Breast epithelium (tissue), 4 donors: ENCODE measurements at regions of chr15 and their contacts with region 1.

Region 1: DNA sequence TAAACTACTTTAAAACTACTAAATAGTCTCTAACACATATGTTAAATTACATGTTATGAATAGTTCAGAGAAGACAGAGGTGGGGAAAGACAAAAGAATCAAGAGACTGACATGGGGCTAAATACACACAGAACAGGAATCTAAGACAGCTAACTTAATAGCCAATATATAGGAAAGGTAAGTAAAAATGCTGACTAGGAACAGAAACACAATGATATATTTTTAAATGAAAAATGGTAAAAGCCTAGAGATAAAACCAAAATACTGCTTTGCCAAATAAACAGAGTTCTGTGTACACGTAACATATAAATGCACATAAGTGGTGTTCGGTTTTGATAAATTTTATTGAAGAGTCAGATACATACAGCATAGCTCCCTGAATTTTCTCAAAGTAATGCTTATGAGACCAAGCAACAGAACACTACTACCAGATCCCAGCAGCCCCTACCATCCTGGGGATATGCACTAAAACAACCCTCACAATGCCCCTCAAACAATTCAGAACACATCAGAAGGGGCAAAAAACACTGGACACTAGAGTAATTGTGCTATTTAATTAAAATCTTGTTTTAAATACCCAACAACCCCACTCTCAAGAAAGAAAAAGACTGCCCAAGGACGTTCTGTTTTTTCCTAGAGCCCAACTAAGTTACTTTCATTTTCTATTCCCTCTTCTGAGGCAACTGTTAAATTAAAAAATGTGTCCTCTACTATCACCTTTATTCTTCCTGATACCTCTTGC is 121.1 kb downstream of the ADAM10 start:
- DNase-seq: no peak
- H3K4me3 ChIP-seq: peak overlapping the region; percentile 35 to 60 (median 38)
- H3K27ac ChIP-seq: peak overlapping the region; percentile 67 to 75
- H3K4me1 ChIP-seq: peaks cover 0 to 4% of the 10 kb centered on the region in 2 donors
- H3K27me3 ChIP-seq: no peaks in the 10 kb centered on the region
- CTCF ChIP-seq: no peak
- POLR2A ChIP-seq: no peak

Region 2: GRCh38 chr15:58322253-58322652 is 306.1 kb before region 1 on chr15:
- intact Hi-C with region 1: loop called (anchors 5 kb)
- DNase-seq: no peak
- H3K4me3 ChIP-seq: no peak overlapping the region
- H3K27ac ChIP-seq: peak overlapping the region in 1 of 2 donors; percentile 49
- H3K4me1 ChIP-seq: no peaks in the 10 kb centered on the region
- H3K27me3 ChIP-seq: no peaks in the 10 kb centered on the region
- CTCF ChIP-seq: no peak
- POLR2A ChIP-seq: no peak